ENCODE measurements at regions of chr7 and their contacts with region 1.

Region 1: GRCh38 chr7:119935418-119936025 is 337.5 kb upstream of the KCND2 start:
- DNase-seq: peak in 1 of 2 experiments; percentile 5
- H3K4me3 ChIP-seq: no peak overlapping the region
- H3K4me3 Mint-ChIP-seq: no peak overlapping the region
- H3K27ac Mint-ChIP-seq: no peak overlapping the region
- H3K4me1 ChIP-seq: no peaks in the 10 kb centered on the region
- H3K4me1 Mint-ChIP-seq: no peaks in the 10 kb centered on the region
- H3K27me3 ChIP-seq: no peaks in the 10 kb centered on the region
- H3K27me3 Mint-ChIP-seq: no peaks in the 10 kb centered on the region
- CTCF ChIP-seq: peak; percentile 29 to 44

Region 2: GRCh38 chr7:119949053-119949452 is 13.5 kb after region 1 on chr7:
- CTCF ChIA-PET with region 1: no interaction called
- POLR2A ChIA-PET with region 1: no interaction called
- intact Hi-C with region 1: no loop called
- DNase-seq: no peak
- H3K4me3 ChIP-seq: no peak overlapping the region
- H3K4me3 Mint-ChIP-seq: no peak overlapping the region
- H3K27ac Mint-ChIP-seq: no peak overlapping the region
- H3K4me1 ChIP-seq: no peaks in the 10 kb centered on the region
- H3K4me1 Mint-ChIP-seq: no peaks in the 10 kb centered on the region
- H3K27me3 ChIP-seq: no peaks in the 10 kb centered on the region
- H3K27me3 Mint-ChIP-seq: no peaks in the 10 kb centered on the region
- CTCF ChIP-seq: no peak

Region 3: GRCh38 chr7:120089968-120090367 is 154.4 kb after region 1 on chr7:
- CTCF ChIA-PET with region 1: no interaction called
- POLR2A ChIA-PET with region 1: no interaction called
- intact Hi-C with region 1: loop called (anchors 1 kb)
- DNase-seq: peak; percentile 28 to 61
- H3K4me3 ChIP-seq: no peak overlapping the region
- H3K4me3 Mint-ChIP-seq: no peak overlapping the region
- H3K27ac Mint-ChIP-seq: no peak overlapping the region
- H3K4me1 ChIP-seq: no peaks in the 10 kb centered on the region
- H3K4me1 Mint-ChIP-seq: no peaks in the 10 kb centered on the region
- H3K27me3 ChIP-seq: no peaks in the 10 kb centered on the region
- H3K27me3 Mint-ChIP-seq: peaks cover 7% of the 10 kb centered on the region
- CTCF ChIP-seq: peak in 1 of 2 experiments; percentile 8

Region 4: GRCh38 chr7:120554960-120555571 is 619.5 kb after region 1 on chr7:
- CTCF ChIA-PET with region 1: no interaction called
- POLR2A ChIA-PET with region 1: no interaction called
- intact Hi-C with region 1: loop called (anchors 1 kb)
- DNase-seq: peak; percentile 51 to 64
- H3K4me3 ChIP-seq: no peak overlapping the region
- H3K4me3 Mint-ChIP-seq: no peak overlapping the region
- H3K27ac Mint-ChIP-seq: no peak overlapping the region
- H3K4me1 ChIP-seq: no peaks in the 10 kb centered on the region
- H3K4me1 Mint-ChIP-seq: no peaks in the 10 kb centered on the region
- H3K27me3 ChIP-seq: no peaks in the 10 kb centered on the region
- H3K27me3 Mint-ChIP-seq: peaks cover 3% of the 10 kb centered on the region
- CTCF ChIP-seq: peak; percentile 61 to 76

Measured in Caco-2 (cell line).